Caco-2 (cell line): ENCODE measurements at regions of chr15 and their contacts with region 1.

Region 1: DNA sequence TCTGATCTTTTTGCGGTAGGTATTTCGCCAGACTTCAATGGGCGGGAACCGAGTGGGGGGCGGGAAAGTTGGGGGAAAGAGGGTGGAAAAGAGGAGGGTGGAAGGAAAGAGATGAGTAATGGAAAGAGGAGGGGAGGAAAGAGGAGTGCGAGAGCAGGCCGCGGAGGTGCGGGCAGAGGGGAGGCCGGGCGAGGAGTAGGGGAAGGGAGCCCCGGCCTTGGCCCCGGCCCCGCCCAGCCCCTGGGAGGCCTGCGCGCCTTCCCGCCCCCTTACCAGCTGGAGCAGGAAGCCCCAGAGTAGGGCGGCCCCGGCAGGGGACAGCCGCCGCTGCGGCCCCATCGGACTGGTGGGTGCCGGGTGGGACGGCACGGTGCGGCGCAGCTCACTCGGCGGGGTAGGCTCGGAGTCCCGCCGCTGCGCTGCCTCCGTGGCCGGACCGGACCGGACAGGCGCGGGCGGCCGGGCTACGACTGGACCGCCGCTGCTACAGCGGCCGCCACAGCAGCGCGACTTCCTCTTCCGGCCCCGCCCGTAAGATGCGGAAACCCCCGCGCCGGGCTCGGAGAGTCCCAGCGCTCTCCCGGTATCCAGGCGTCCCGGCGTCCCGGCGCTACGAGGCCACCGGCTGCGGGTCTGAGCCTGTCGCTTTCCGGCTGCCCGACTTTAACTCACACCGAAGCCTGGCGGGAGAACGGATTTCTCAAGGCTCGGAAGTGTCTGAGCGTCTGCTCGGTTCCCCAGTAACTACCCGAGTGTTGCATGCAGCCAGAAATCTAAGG is at the start of gene SPPL2A:
- DNase-seq: peak; percentile 89 to 90
- H3K4me3 ChIP-seq: peak within 1 kb of the TSS; percentile 57
- H3K4me3 Mint-ChIP-seq: peak within 1 kb of the TSS; percentile 77
- H3K27ac Mint-ChIP-seq: peak within 1 kb of the TSS; percentile 81
- H3K4me1 ChIP-seq: peaks cover 10% of the 10 kb centered on the region; the same call in 1 of the 2 replicates
- H3K4me1 Mint-ChIP-seq: peaks cover 37% of the 10 kb centered on the region
- H3K27me3 ChIP-seq: no peaks in the 10 kb centered on the region
- H3K27me3 Mint-ChIP-seq: no peaks in the 10 kb centered on the region
- CTCF ChIP-seq: no peak
- total RNA-seq, gene SPPL2A: 131 and 141 TPM in 2 replicates

Region 2: DNA sequence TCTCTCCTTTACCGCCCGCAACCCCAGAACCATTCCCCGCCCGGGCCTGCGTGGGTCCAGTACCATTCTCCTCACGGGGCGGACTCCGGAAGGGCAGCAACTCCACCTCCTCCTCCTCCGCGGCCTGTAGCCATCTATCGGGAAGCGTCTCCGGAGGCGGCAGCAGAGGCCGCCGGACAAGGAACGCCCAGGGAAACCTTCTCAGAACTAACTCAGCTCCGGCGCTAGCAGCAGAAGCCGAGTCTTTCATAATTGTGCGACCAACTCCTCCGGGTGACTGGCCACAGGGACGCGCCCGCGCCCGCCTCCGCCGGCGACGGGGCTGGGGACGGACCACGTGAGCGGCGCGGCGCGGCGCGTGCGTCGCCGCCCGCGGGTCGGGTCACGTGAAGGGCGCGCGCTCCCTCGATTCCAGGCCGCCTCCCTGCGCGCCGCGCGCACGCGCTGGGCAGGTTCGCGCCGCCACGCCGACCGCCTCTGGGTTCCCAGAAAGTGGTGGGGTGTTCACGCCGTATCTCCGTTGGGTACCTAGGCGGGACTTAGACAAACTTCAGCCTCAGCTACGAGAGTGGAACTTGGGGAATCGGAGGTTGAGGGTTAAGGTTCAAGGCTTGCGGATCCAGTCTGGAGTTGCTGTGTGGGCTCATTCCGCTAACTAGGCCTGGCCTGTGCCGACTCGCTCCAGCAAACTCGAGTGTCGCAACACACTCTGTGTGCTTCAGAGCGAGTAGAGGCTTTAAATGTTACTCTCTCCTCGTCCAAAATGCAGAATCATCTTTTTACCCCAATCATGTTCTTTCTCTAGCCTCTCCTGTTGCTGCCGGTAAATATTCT is 78.7 kb before region 1 on chr15 and contains the start of gene TRPM7:
- CTCF ChIA-PET with region 1: interaction called, 3 read pairs
- POLR2A ChIA-PET with region 1: interaction called, 4 read pairs
- intact Hi-C with region 1: loop called (anchors 2 kb)
- DNase-seq: peak; percentile 83 to 91
- H3K4me3 ChIP-seq: peak within 1 kb of the TSS; percentile 87
- H3K4me3 Mint-ChIP-seq: peak within 1 kb of the TSS; percentile 85
- H3K27ac Mint-ChIP-seq: peak within 1 kb of the TSS; percentile 98
- H3K4me1 ChIP-seq: peaks cover under 1% of the 10 kb centered on the region; the same call in 1 of the 2 replicates
- H3K4me1 Mint-ChIP-seq: peaks cover 13% of the 10 kb centered on the region
- H3K27me3 ChIP-seq: no peaks in the 10 kb centered on the region
- H3K27me3 Mint-ChIP-seq: no peaks in the 10 kb centered on the region
- CTCF ChIP-seq: peak in 1 of 2 experiments; percentile 5
- total RNA-seq, gene TRPM7: 70.9 and 73.4 TPM in 2 replicates

Region 3: GRCh38 chr15:50718700-50719125 is 46.7 kb before region 1 on chr15:
- CTCF ChIA-PET with region 1: no interaction called
- POLR2A ChIA-PET with region 1: no interaction called
- intact Hi-C with region 1: loop called (anchors 1 kb)
- DNase-seq: peak; percentile 56 to 59
- H3K4me3 ChIP-seq: no peak overlapping the region
- H3K4me3 Mint-ChIP-seq: peak overlapping the region; percentile 42
- H3K27ac Mint-ChIP-seq: peak overlapping the region; percentile 82
- H3K4me1 ChIP-seq: peaks cover 13% of the 10 kb centered on the region
- H3K4me1 Mint-ChIP-seq: peaks cover 19% of the 10 kb centered on the region
- H3K27me3 ChIP-seq: no peaks in the 10 kb centered on the region
- H3K27me3 Mint-ChIP-seq: no peaks in the 10 kb centered on the region
- CTCF ChIP-seq: no peak

Region 4: GRCh38 chr15:50813877-50814276 is 48.5 kb after region 1 on chr15:
- CTCF ChIA-PET with region 1: no interaction called
- POLR2A ChIA-PET with region 1: no interaction called
- intact Hi-C with region 1: no loop called
- DNase-seq: no peak
- H3K4me3 ChIP-seq: no peak overlapping the region
- H3K4me3 Mint-ChIP-seq: no peak overlapping the region
- H3K27ac Mint-ChIP-seq: no peak overlapping the region
- H3K4me1 ChIP-seq: peaks cover 8% of the 10 kb centered on the region; the same call in 1 of the 2 replicates
- H3K4me1 Mint-ChIP-seq: peaks cover 16% of the 10 kb centered on the region
- H3K27me3 ChIP-seq: no peaks in the 10 kb centered on the region
- H3K27me3 Mint-ChIP-seq: no peaks in the 10 kb centered on the region
- CTCF ChIP-seq: no peak

Region 5: GRCh38 chr15:51038166-51038963 is 273.0 kb after region 1 on chr15:
- CTCF ChIA-PET with region 1: no interaction called
- POLR2A ChIA-PET with region 1: no interaction called
- intact Hi-C with region 1: no loop called
- DNase-seq: no peak
- H3K4me3 ChIP-seq: peak overlapping the region; percentile 37
- H3K4me3 Mint-ChIP-seq: peak overlapping the region; percentile 93
- H3K27ac Mint-ChIP-seq: peak overlapping the region; percentile 97
- H3K4me1 ChIP-seq: peaks cover 8% of the 10 kb centered on the region; the same call in 1 of the 2 replicates
- H3K4me1 Mint-ChIP-seq: peaks cover 15% of the 10 kb centered on the region
- H3K27me3 ChIP-seq: no peaks in the 10 kb centered on the region
- H3K27me3 Mint-ChIP-seq: no peaks in the 10 kb centered on the region
- CTCF ChIP-seq: no peak